WTC11 (cell line): ENCODE measurements at regions of chr7 and their contacts with region 1.

Region 1: GRCh38 chr7:71752171-71752935 is 620.4 kb downstream of the GALNT17 start:
- DNase-seq: peak; percentile 93
- ATAC-seq: peak; percentile 95
- H3K4me3 Mint-ChIP-seq: peak overlapping the region; percentile 58
- H3K27ac Mint-ChIP-seq: no peak overlapping the region
- H3K4me1 Mint-ChIP-seq: peaks cover 12% of the 10 kb centered on the region
- H3K27me3 Mint-ChIP-seq: peaks cover 23% of the 10 kb centered on the region
- CTCF ChIP-seq: peak; percentile 85

Region 2: DNA sequence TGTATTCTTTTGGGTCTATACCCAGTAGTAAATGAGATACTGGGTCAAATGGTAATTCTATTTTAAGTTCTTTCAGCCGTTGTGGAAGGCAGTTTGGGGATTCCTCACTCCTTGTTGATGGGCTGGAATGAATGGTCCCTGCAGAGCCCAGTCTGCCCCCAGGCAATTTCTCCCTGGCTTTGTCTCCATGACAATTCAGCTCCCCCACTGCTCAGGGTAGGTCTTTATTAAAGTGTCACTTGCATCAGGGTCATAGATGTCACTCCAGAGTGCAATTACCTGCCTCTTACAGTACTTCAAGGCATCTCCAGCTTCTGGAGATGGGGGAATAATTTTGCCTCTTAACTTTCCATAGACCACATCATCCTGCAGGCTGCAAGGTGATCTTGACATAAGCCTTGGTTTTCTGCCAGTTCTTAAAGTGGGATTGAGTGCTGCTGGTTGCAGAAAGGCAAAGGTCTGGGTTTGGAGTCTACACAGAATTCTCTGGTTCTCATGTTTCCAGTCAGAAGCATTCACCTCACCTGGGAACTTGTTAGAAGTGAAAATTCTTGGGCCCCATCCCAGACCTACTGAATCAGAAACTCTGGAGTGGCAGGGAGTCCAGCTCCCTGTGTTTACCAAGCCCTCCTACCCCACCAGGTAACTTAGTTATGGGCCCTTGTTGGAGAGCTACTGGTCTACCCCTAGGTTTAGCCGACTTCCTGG is 178.0 kb before region 1 on chr7:
- CTCF ChIA-PET with region 1: no interaction called
- POLR2A ChIA-PET with region 1: no interaction called
- DNase-seq: peak; percentile 45
- ATAC-seq: peak; percentile 74
- H3K4me3 Mint-ChIP-seq: no peak overlapping the region
- H3K27ac Mint-ChIP-seq: peak overlapping the region; percentile 36
- H3K4me1 Mint-ChIP-seq: peaks cover 14% of the 10 kb centered on the region
- H3K27me3 Mint-ChIP-seq: no peaks in the 10 kb centered on the region
- CTCF ChIP-seq: no peak

Region 3: GRCh38 chr7:71682841-71683781 is 69.2 kb before region 1 on chr7:
- CTCF ChIA-PET with region 1: interaction called, 11 read pairs
- POLR2A ChIA-PET with region 1: no interaction called
- DNase-seq: peak; percentile 63
- ATAC-seq: peak; percentile 84
- H3K4me3 Mint-ChIP-seq: 0 out of 2 replicates have a peak overlapping the region, but pooled peaks have one; percentile 10
- H3K27ac Mint-ChIP-seq: peak overlapping the region; percentile 98
- H3K4me1 Mint-ChIP-seq: peaks cover 42% of the 10 kb centered on the region
- H3K27me3 Mint-ChIP-seq: no peaks in the 10 kb centered on the region
- CTCF ChIP-seq: no peak

Region 4: GRCh38 chr7:71697400-71697799 is 55.0 kb before region 1 on chr7:
- CTCF ChIA-PET with region 1: no interaction called
- POLR2A ChIA-PET with region 1: no interaction called
- DNase-seq: no peak
- ATAC-seq: no peak
- H3K4me3 Mint-ChIP-seq: no peak overlapping the region
- H3K27ac Mint-ChIP-seq: no peak overlapping the region
- H3K4me1 Mint-ChIP-seq: no peaks in the 10 kb centered on the region
- H3K27me3 Mint-ChIP-seq: no peaks in the 10 kb centered on the region; the same call in 1 of the 2 replicates
- CTCF ChIP-seq: no peak

Region 5: DNA sequence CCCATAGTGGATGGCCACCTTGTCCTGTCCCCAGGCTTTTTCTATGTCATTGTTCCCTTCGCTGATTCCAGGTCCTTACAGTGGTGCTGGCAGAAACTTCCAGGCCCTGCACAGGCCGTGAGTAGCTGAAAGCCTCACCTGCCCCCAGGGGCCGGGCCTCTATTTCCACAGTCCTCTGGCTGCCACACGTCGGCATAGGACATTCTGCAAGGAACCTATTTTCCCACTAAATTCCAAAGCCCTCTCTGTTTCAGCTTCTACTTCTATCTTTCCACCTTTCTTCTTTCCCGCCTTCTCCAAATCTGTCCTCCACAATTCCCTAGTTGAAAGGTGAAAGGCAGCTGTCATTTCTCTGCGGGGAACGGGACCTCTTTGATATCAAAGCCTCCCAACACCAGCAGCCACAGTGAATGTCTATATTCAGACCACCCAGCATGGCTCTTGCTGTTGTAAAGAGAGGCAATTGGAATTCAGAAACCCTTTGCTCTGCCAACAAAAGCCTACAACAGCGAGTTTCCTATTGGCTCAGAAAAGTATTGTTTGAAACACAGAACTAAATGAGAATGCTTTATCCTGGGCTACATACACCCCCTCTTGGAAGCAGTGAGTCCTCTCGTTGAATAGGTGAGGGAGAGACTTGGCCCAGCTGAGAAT is 12.7 kb before region 1 on chr7:
- CTCF ChIA-PET with region 1: interaction called, 40 read pairs
- POLR2A ChIA-PET with region 1: no interaction called
- DNase-seq: no peak
- ATAC-seq: peak; percentile 81
- H3K4me3 Mint-ChIP-seq: no peak overlapping the region
- H3K27ac Mint-ChIP-seq: peak overlapping the region; percentile 87; the same call in 1 of the 2 replicates
- H3K4me1 Mint-ChIP-seq: peaks cover 25% of the 10 kb centered on the region
- H3K27me3 Mint-ChIP-seq: no peaks in the 10 kb centered on the region
- CTCF ChIP-seq: no peak

Region 6: DNA sequence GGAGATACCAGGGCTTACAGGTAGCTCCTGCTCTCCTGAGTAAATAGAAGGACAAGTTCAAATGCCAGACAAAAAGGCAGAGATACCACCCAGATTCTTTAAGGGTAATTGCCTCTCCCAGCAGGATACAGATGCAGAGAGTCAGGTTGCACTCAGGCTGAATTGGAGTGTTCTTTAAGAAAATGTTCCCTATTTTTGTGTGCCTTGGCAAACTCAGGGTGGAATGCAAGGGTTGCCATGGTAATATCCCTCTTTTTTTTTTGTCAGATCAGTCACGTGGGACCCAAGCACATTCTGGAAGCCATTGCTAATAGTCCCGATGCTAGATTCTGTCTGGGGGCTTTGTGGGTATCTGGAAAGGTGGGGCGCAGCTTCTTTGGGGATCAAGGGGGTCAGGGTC is 31.8 kb after region 1 on chr7:
- CTCF ChIA-PET with region 1: interaction called, 12 read pairs
- POLR2A ChIA-PET with region 1: no interaction called
- DNase-seq: no peak
- ATAC-seq: peak; percentile 72
- H3K4me3 Mint-ChIP-seq: no peak overlapping the region
- H3K27ac Mint-ChIP-seq: no peak overlapping the region
- H3K4me1 Mint-ChIP-seq: peaks cover 37% of the 10 kb centered on the region
- H3K27me3 Mint-ChIP-seq: peaks cover 6% of the 10 kb centered on the region
- CTCF ChIP-seq: no peak

Region 7: DNA sequence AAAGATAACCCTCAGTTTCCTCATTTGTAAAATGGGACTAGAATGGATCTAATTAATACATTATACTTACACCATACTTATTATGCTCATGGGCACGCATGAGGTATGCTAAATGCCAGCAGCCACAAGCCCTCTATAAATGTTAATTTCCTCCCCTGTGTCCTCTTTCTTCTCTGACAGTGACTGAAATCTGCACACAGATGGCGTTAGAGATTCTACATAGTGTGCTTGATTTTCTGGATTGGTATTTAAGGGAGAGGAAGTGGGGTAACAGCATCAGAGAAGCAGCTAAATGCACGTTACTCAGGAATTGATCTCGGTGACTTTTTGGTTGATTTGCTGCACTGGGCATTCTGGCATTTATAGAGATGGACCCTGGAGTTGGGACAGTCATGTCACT is 91.3 kb after region 1 on chr7:
- CTCF ChIA-PET with region 1: interaction called, 19 read pairs
- POLR2A ChIA-PET with region 1: no interaction called
- DNase-seq: no peak
- ATAC-seq: peak; percentile 39; the same call in 1 of the 2 replicates
- H3K4me3 Mint-ChIP-seq: no peak overlapping the region
- H3K27ac Mint-ChIP-seq: no peak overlapping the region
- H3K4me1 Mint-ChIP-seq: peaks cover 9% of the 10 kb centered on the region
- H3K27me3 Mint-ChIP-seq: no peaks in the 10 kb centered on the region
- CTCF ChIP-seq: no peak

Region 8: GRCh38 chr7:71925663-71926062 is 173.3 kb after region 1 on chr7:
- CTCF ChIA-PET with region 1: interaction called, 29 read pairs
- POLR2A ChIA-PET with region 1: no interaction called
- DNase-seq: peak; percentile 51
- ATAC-seq: peak; percentile 100
- H3K4me3 Mint-ChIP-seq: no peak overlapping the region
- H3K27ac Mint-ChIP-seq: no peak overlapping the region
- H3K4me1 Mint-ChIP-seq: no peaks in the 10 kb centered on the region
- H3K27me3 Mint-ChIP-seq: no peaks in the 10 kb centered on the region
- CTCF ChIP-seq: peak; percentile 55